Mammary epithelial cell (primary cell): ENCODE measurements at regions of chr7 and their contacts with region 1.

Region 1: GRCh38 chr7:5348134-5349004 is 65.6 kb downstream of the SLC29A4 start:
- DNase-seq: no peak
- H3K4me3 ChIP-seq: no peak overlapping the region
- H3K27ac ChIP-seq: no peak overlapping the region
- H3K4me1 ChIP-seq: no peaks in the 10 kb centered on the region
- H3K27me3 ChIP-seq: no peaks in the 10 kb centered on the region
- CTCF ChIP-seq: no peak

Region 2: GRCh38 chr7:5294169-5294987 is 54.0 kb before region 1 on chr7:
- CTCF ChIA-PET with region 1: no interaction called
- dilution Hi-C with region 1: loop called (anchors 5 kb)
- in situ Hi-C with region 1: no loop called
- intact Hi-C with region 1: no loop called
- DNase-seq: no peak
- H3K4me3 ChIP-seq: no peak overlapping the region
- H3K27ac ChIP-seq: no peak overlapping the region
- H3K4me1 ChIP-seq: no peaks in the 10 kb centered on the region
- H3K27me3 ChIP-seq: no peaks in the 10 kb centered on the region
- CTCF ChIP-seq: no peak

Region 3: DNA sequence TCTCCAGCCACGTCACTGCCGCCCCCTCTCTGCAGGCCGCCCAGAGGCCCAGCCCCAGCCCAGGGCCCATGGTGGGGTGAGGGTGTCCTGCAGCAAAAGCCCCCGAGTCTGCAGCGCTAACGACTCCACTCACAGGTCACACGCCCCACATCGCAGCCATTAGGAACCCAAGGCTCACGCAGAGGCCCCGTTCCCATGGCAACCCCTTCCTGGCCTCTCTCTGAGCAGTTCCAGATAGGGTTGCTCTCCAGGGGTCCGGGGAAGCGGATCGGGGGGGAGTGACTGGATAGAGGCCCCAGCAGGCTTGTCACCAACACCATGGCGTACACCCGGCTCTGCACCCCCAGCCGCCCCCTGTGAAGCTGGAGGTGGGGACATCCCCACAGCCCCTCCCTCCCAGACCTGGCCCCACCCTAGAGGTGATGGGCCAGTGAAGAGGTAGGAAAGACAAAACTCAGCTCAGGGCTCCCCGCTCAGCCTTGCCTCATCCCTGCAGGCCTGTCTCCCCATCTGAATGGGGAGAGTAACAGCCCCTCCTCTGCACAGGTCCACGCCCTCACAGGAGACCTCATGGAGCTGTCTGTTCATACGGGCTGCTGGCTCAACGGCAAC is 34.0 kb after region 1 on chr7:
- CTCF ChIA-PET with region 1: no interaction called
- dilution Hi-C with region 1: loop called (anchors 5 kb)
- in situ Hi-C with region 1: no loop called
- intact Hi-C with region 1: no loop called
- DNase-seq: no peak
- H3K4me3 ChIP-seq: no peak overlapping the region
- H3K27ac ChIP-seq: no peak overlapping the region
- H3K4me1 ChIP-seq: no peaks in the 10 kb centered on the region
- H3K27me3 ChIP-seq: no peaks in the 10 kb centered on the region
- CTCF ChIP-seq: no peak

Region 4: GRCh38 chr7:5406957-5407945 is 58.9 kb after region 1 on chr7:
- CTCF ChIA-PET with region 1: no interaction called
- dilution Hi-C with region 1: no loop called
- in situ Hi-C with region 1: no loop called
- intact Hi-C with region 1: no loop called
- DNase-seq: no peak
- H3K4me3 ChIP-seq: no peak overlapping the region
- H3K27ac ChIP-seq: no peak overlapping the region
- H3K4me1 ChIP-seq: peaks cover 8% of the 10 kb centered on the region
- H3K27me3 ChIP-seq: no peaks in the 10 kb centered on the region
- CTCF ChIP-seq: no peak

Region 5: GRCh38 chr7:5472432-5473315 is 124.3 kb after region 1 on chr7:
- CTCF ChIA-PET with region 1: no interaction called
- dilution Hi-C with region 1: no loop called
- in situ Hi-C with region 1: no loop called
- intact Hi-C with region 1: no loop called
- DNase-seq: no peak
- H3K4me3 ChIP-seq: no peak overlapping the region
- H3K27ac ChIP-seq: no peak overlapping the region
- H3K4me1 ChIP-seq: peaks cover 5% of the 10 kb centered on the region
- H3K27me3 ChIP-seq: no peaks in the 10 kb centered on the region
- CTCF ChIP-seq: peak in 1 of 2 donors; percentile 5

Region 6: GRCh38 chr7:5580714-5581395 is 232.5 kb after region 1 on chr7:
- CTCF ChIA-PET with region 1: no interaction called
- dilution Hi-C with region 1: no loop called
- in situ Hi-C with region 1: no loop called
- intact Hi-C with region 1: no loop called
- DNase-seq: no peak
- H3K4me3 ChIP-seq: no peak overlapping the region
- H3K27ac ChIP-seq: no peak overlapping the region
- H3K4me1 ChIP-seq: no peaks in the 10 kb centered on the region
- H3K27me3 ChIP-seq: no peaks in the 10 kb centered on the region
- CTCF ChIP-seq: no peak